ENCODE measurements at regions of chr9 and their contacts with region 1.

Region 1: DNA sequence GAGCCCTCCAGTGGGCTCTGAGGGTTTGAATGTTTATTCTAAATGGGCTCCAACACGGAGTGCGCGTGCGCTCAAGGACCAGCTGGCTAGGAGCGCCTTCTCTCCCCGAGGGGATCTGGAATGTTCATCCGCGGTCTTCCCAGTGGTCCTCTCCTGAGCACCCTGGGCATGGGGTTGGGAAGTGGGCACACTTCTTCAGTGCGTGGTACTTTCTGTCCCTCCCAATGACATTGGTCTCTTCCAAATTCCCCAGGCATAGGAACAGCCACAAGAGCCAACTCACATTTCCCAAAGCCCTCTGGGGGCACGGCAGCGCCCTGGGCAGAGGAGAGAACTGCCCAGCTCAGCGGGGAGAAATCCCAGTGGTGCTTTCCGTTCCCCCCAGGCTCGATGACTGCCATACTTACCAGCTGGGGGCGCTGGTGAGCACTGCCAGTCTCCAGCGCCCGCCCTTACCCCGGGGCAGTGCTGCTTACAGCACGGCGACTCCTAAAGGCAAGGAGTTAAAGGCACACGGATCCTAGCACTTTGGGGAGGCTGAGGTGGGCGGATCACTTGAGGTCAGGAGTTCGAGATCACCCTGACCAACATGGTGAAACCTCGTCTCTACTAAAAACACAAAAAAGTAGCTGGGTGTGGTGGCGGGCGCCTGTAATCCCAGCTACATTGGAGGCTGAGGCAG is 29.9 kb upstream of the OBP2B start:
- DNase-seq: peak; percentile 34 to 72 (median 64)
- ATAC-seq: peak; percentile 93
- H3K4me3 ChIP-seq: peak overlapping the region; percentile 41
- H3K4me3 Mint-ChIP-seq: peak overlapping the region; percentile 57 to 79 (median 69)
- H3K27ac ChIP-seq: no peak overlapping the region
- H3K27ac Mint-ChIP-seq: peak overlapping the region in 1 of 9 donors; percentile 21
- H3K4me1 ChIP-seq: peaks cover 0 to 3% of the 10 kb centered on the region in 2 donors
- H3K4me1 Mint-ChIP-seq: peaks cover 0 to 17% (median 8%) of the 10 kb centered on the region in 7 donors
- H3K27me3 ChIP-seq: peaks cover 0 to 3% of the 10 kb centered on the region in 2 donors
- H3K27me3 Mint-ChIP-seq: peaks cover 9 to 26% (median 12%) of the 10 kb centered on the region in 5 donors

Region 2: GRCh38 chr9:133252301-133252780 is 13.3 kb after region 1 on chr9:
- CTCF ChIA-PET with region 1: no interaction called
- POLR2A ChIA-PET with region 1: no interaction called
- intact Hi-C with region 1: no loop called
- DNase-seq: peak in 1 of 9 donors; percentile 47
- ATAC-seq: no peak
- H3K4me3 ChIP-seq: no peak overlapping the region
- H3K4me3 Mint-ChIP-seq: peak overlapping the region in 1 of 10 donors; percentile 73
- H3K27ac ChIP-seq: peak overlapping the region; percentile 54
- H3K27ac Mint-ChIP-seq: peak overlapping the region in 1 of 9 donors; percentile 71
- H3K4me1 ChIP-seq: no peaks in the 10 kb centered on the region
- H3K4me1 Mint-ChIP-seq: peaks cover 0 to 29% (median 0%) of the 10 kb centered on the region in 7 donors
- H3K27me3 ChIP-seq: peaks cover 0 to 2% of the 10 kb centered on the region in 2 donors
- H3K27me3 Mint-ChIP-seq: peaks cover 0 to 8% (median 7%) of the 10 kb centered on the region in 5 donors

Region 3: DNA sequence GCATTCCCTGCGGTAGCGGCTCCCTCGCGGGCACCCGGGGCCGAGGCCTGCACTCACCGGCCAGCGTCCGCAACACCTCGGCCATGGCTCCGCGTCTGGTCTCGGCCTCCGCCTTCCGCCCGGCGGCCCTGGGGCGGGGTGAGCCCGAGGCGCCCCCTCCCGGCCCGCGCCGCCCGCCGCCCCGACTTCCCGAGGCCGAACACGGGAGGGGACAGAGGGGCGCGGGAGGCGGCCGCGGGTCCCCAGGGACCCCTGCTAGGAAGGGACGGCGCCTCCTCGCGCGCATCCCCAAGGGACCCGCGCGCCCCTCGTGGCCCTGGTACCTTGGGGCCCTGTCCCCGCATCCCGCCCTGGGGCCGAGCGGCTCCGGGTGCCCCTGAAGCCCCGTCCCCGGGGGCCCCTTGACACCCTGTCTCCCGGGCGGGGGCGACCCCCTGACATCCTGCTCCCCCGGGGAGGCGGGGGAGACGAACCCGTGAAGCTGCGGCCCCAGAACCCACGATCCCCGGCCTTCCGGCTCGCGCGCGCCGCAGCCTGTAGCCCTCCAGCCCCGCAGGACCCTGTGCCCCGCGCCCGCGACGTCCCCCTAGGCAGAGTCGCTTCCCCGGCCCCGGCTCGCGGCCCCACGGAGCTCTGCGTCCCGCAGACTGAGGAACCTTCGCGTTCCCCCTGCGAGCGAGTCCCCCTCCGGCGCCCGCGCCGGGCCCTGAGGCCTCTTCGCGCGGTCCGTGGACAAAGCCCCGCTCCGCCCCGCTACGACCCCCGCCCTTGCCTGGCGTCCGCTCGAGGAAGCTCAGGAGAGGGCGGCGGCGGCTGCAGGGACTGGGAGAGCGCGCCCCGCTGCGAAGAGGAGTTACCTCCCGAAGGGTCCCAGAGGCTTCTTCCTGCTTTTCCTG is 36.4 kb after region 1 on chr9 and contains the start of gene ABO:
- CTCF ChIA-PET with region 1: no interaction called
- POLR2A ChIA-PET with region 1: no interaction called
- intact Hi-C with region 1: loop called in 1 of 2 experiments (anchors 2 kb)
- DNase-seq: peak in 1 of 9 donors; percentile 33
- ATAC-seq: peak; percentile 48
- H3K4me3 ChIP-seq: no peak within 1 kb of the TSS
- H3K4me3 Mint-ChIP-seq: peak within 1 kb of the TSS in 6 of 10 donors; percentile 4 to 64 (median 30)
- H3K27ac ChIP-seq: no peak within 1 kb of the TSS
- H3K27ac Mint-ChIP-seq: peak within 1 kb of the TSS in 1 of 9 donors; percentile 66
- H3K4me1 ChIP-seq: no peaks in the 10 kb centered on the region
- H3K4me1 Mint-ChIP-seq: peaks cover 0 to 14% (median 4%) of the 10 kb centered on the region in 7 donors
- H3K27me3 ChIP-seq: no peaks in the 10 kb centered on the region
- H3K27me3 Mint-ChIP-seq: peaks cover 36 to 60% (median 49%) of the 10 kb centered on the region in 5 donors
- total RNA-seq, gene ABO: 1.7 to 3.3 TPM in 2 of 5 experiments, not detected in the others

Region 4: GRCh38 chr9:133485361-133486260 is 246.6 kb after region 1 on chr9:
- CTCF ChIA-PET with region 1: no interaction called
- POLR2A ChIA-PET with region 1: no interaction called
- intact Hi-C with region 1: loop called (anchors 1 to 5 kb)
- DNase-seq: no peak
- ATAC-seq: no peak
- H3K4me3 ChIP-seq: no peak overlapping the region
- H3K4me3 Mint-ChIP-seq: peak overlapping the region in 3 of 10 donors; percentile 14 to 49 (median 35)
- H3K27ac ChIP-seq: no peak overlapping the region
- H3K27ac Mint-ChIP-seq: peak overlapping the region in 1 of 9 donors; percentile 50
- H3K4me1 ChIP-seq: peaks cover 3 to 5% of the 10 kb centered on the region in 2 donors
- H3K4me1 Mint-ChIP-seq: peaks cover 0 to 7% (median 6%) of the 10 kb centered on the region in 7 donors
- H3K27me3 ChIP-seq: no peaks in the 10 kb centered on the region
- H3K27me3 Mint-ChIP-seq: peaks cover 0 to 6% (median 0%) of the 10 kb centered on the region in 5 donors

Measured in naive thymus-derived CD4-positive, alpha-beta T cell (primary cell).